ENCODE measurements at regions of chr14 and their contacts with region 1.

Region 1: GRCh38 chr14:106599209-106599608 is 1072.8 kb downstream of the TMEM121 start:
- DNase-seq: no peak
- H3K4me3 ChIP-seq: no peak overlapping the region
- H3K4me1 ChIP-seq: no peaks in the 10 kb centered on the region
- H3K27me3 ChIP-seq: no peaks in the 10 kb centered on the region

Region 2: DNA sequence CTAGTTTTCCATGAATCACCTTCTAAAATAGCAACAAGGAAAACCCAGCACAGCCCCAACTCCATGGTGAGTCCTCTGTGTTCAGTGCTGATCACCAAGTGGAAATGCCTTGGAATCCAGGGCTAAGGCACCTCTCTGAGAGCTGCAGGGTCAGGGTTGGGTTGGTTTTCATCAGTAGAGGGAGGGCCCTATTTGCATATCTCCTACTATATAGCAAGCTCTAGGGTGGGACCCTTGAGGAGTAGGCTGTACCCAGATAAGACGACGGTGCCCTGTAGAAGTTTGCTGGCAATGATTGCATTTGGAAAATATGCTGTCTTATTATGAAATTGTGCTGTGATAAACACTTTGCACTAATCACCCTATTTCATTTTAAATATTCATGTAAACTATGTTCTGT is 61.0 kb before region 1 on chr14:
- in situ Hi-C with region 1: no loop called
- DNase-seq: no peak
- H3K4me3 ChIP-seq: no peak overlapping the region
- H3K4me1 ChIP-seq: no peaks in the 10 kb centered on the region
- H3K27me3 ChIP-seq: no peaks in the 10 kb centered on the region

Region 3: DNA sequence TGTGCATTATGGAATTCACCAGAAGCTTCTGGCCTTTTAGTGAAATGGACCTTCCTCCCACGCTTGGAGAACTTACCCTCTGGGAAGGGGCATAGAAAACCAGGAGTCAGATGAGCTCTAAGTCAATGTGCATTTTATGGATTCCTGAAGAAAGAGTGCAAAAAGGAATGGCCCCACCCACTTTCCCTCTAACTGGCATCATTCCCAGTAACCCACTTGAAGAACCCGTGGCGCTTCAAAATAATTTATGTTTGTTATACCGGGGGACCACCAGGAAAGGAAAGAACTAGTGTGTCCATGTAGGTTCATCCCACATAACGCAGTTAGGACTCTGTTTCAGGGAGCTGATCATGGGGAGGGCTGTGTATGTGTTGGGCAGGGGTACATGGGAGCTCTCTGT is 80.6 kb after region 1 on chr14:
- in situ Hi-C with region 1: loop called (anchors 5 kb)
- DNase-seq: no peak
- H3K4me3 ChIP-seq: no peak overlapping the region
- H3K4me1 ChIP-seq: no peaks in the 10 kb centered on the region
- H3K27me3 ChIP-seq: no peaks in the 10 kb centered on the region